Calu3 (cell line): ENCODE measurements at regions of chr1 and their contacts with region 1.

Region 1: DNA sequence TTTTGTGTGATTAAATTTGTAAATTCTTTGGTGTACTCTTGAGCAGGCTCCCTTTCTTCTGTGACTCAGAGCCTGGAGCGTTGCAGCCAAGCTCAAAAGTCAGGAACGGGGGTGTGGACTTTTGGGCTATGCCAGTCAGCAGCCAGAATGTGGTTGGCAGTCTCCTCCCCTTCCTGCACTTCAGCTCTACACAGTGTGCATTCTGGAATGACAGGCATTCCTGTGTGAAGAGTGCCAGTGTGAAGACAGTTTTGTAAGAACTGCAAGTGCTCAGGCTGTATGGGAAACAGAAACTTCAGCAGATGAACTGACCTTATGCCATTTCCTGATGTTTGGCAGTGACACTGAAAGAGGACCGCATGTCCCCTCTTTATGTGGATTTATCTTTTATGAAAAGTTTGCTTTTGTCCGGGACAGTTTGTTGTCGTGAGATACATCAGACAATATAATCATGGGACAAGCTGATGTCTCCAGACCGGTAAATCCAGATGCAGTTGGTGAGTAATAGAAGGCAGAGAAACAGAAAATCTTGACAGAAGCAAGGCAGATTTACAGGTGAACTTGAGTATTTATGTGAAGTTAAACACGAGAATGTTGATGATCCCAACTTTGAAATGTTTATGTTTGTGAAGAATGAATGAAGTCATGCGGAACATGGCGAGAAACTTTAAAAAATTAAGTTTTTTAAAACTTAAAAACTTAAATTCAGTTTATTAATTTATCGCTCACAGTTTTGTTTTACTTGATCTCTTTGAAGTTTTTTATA is 67.7 kb upstream of the RCC1 start:
- DNase-seq: peak; percentile 81
- H3K4me3 Mint-ChIP-seq: peak overlapping the region; percentile 73
- H3K27ac Mint-ChIP-seq: peak overlapping the region; percentile 83
- H3K4me1 Mint-ChIP-seq: peaks cover 14% of the 10 kb centered on the region
- H3K27me3 Mint-ChIP-seq: no peaks in the 10 kb centered on the region
- CTCF ChIP-seq: no peak

Region 2: GRCh38 chr1:28417429-28417922 is 20.6 kb before region 1 on chr1:
- CTCF ChIA-PET with region 1: interaction called, 4 read pairs
- intact Hi-C with region 1: loop called (anchors 2 kb)
- DNase-seq: peak; percentile 63
- H3K4me3 Mint-ChIP-seq: no peak overlapping the region
- H3K27ac Mint-ChIP-seq: peak overlapping the region; percentile 91
- H3K4me1 Mint-ChIP-seq: peaks cover 31% of the 10 kb centered on the region
- H3K27me3 Mint-ChIP-seq: no peaks in the 10 kb centered on the region
- CTCF ChIP-seq: no peak

Region 3: GRCh38 chr1:28480308-28480707 is 42.2 kb after region 1 on chr1:
- CTCF ChIA-PET with region 1: no interaction called
- intact Hi-C with region 1: no loop called
- DNase-seq: no peak
- H3K4me3 Mint-ChIP-seq: no peak overlapping the region
- H3K27ac Mint-ChIP-seq: no peak overlapping the region
- H3K4me1 Mint-ChIP-seq: no peaks in the 10 kb centered on the region
- H3K27me3 Mint-ChIP-seq: no peaks in the 10 kb centered on the region
- CTCF ChIP-seq: no peak